H1 (cell line): ENCODE measurements at regions of chr1 and their contacts with region 1.

Region 1: DNA sequence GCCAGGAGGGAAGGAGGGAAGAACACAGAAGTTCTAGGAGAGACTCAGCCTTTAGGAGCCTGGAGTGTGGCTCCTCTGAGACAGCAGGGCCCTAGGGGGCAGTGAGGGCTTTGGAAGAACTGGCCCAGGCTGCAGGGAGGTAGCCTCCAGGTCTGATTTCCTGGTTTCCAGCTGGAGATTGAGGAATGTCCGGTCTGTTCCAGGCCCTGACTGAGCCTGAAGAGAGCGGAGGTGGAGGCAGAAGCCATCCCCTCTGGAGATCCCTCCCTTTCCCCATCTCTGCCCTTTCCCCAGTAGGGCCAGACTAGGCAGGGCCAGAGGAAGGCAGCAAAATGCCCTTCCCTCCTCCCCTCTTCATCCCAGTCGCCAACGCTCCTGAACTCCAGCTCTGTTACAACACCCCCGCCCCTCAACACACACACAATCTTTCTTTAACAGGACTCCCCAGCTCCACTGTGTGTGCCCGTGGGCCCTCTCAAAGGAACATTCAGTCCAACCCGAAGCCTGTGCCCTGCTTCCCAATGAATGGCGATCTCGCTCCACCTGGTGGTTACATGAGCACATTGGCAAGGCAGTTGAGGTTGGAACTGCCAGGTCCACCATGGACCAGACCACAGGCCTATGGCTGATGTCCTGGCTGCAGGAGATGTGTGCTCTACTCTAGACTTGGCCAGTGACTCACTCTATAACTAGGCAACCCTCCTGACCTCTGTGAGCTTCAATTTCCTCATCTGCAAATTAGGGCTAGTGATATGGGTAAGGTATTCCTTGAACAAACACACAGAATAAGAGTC is 32.0 kb downstream of the MAP7D1 start:
- DNase-seq: peak in 1 of 2 experiments; percentile 86
- H3K4me3 ChIP-seq: peak overlapping the region in 2 of 4 experiments; percentile 3 to 37; a peak in 3 of 8 replicates
- H3K27ac ChIP-seq: peak overlapping the region; percentile 19; the same call in 1 of the 2 replicates
- H3K4me1 ChIP-seq: peaks cover 0 to 6% (median 2%) of the 10 kb centered on the region in 4 experiments; a peak in 2 of 7 replicates
- H3K27me3 ChIP-seq: no peaks in the 10 kb centered on the region
- CTCF ChIP-seq: peak; percentile 93 to 98 (median 97)
- EP300 ChIP-seq: no peak; a peak in 1 of 3 replicates
- POLR2A ChIP-seq: peak in 1 of 2 experiments; percentile 62; a peak in 2 of 3 replicates
- RAD21 ChIP-seq: peak; percentile 95 to 97

Region 2: GRCh38 chr1:36099681-36100341 is 88.2 kb before region 1 on chr1:
- CTCF ChIA-PET with region 1: interaction called, 20 read pairs
- POLR2A ChIA-PET with region 1: interaction called, 4 read pairs
- DNase-seq: peak; percentile 76 to 96
- H3K4me3 ChIP-seq: no peak overlapping the region
- H3K27ac ChIP-seq: no peak overlapping the region
- H3K4me1 ChIP-seq: peaks cover 0 to 11% (median 7%) of the 10 kb centered on the region in 4 experiments; a peak in 3 of 7 replicates
- H3K27me3 ChIP-seq: 0 out of 7 replicates have a peak, but pooled peaks cover 0 to 2% (median 0%) of the 10 kb centered on the region in 4 experiments
- CTCF ChIP-seq: peak; percentile 90 to 97 (median 90)
- EP300 ChIP-seq: no peak
- POLR2A ChIP-seq: no peak
- RAD21 ChIP-seq: peak; percentile 97 to 98

Region 3: GRCh38 chr1:36134505-36135329 is 53.3 kb before region 1 on chr1:
- CTCF ChIA-PET with region 1: interaction called, 26 read pairs
- POLR2A ChIA-PET with region 1: no interaction called
- DNase-seq: peak in 1 of 2 experiments; percentile 90
- H3K4me3 ChIP-seq: no peak overlapping the region
- H3K27ac ChIP-seq: no peak overlapping the region
- H3K4me1 ChIP-seq: peaks cover 0 to 2% (median 0%) of the 10 kb centered on the region in 4 experiments; a peak in 2 of 7 replicates
- H3K27me3 ChIP-seq: no peaks in the 10 kb centered on the region
- CTCF ChIP-seq: peak; percentile 77 to 91 (median 83)
- EP300 ChIP-seq: no peak
- POLR2A ChIP-seq: no peak
- RAD21 ChIP-seq: peak; percentile 90 to 92

Region 4: GRCh38 chr1:36155408-36156328 is 32.3 kb before region 1 on chr1 and contains the start of gene MAP7D1:
- CTCF ChIA-PET with region 1: interaction called, 261 read pairs
- POLR2A ChIA-PET with region 1: interaction called, 17 read pairs
- DNase-seq: peak in 1 of 2 experiments; percentile 93
- H3K4me3 ChIP-seq: peak within 1 kb of the TSS; percentile 64 to 96 (median 76)
- H3K27ac ChIP-seq: peak within 1 kb of the TSS; percentile 49
- H3K4me1 ChIP-seq: peaks cover 2 to 28% (median 14%) of the 10 kb centered on the region in 4 experiments
- H3K27me3 ChIP-seq: peaks cover 11 to 29% (median 25%) of the 10 kb centered on the region in 4 experiments
- CTCF ChIP-seq: no peak
- EP300 ChIP-seq: peak in 1 of 2 experiments; percentile 70; a peak in 2 of 3 replicates
- POLR2A ChIP-seq: peak in 1 of 2 experiments; percentile 37; a peak in 1 of 3 replicates
- RAD21 ChIP-seq: no peak
- total RNA-seq, gene MAP7D1: 52.4 and 55.1 TPM in 2 replicates

Region 5: DNA sequence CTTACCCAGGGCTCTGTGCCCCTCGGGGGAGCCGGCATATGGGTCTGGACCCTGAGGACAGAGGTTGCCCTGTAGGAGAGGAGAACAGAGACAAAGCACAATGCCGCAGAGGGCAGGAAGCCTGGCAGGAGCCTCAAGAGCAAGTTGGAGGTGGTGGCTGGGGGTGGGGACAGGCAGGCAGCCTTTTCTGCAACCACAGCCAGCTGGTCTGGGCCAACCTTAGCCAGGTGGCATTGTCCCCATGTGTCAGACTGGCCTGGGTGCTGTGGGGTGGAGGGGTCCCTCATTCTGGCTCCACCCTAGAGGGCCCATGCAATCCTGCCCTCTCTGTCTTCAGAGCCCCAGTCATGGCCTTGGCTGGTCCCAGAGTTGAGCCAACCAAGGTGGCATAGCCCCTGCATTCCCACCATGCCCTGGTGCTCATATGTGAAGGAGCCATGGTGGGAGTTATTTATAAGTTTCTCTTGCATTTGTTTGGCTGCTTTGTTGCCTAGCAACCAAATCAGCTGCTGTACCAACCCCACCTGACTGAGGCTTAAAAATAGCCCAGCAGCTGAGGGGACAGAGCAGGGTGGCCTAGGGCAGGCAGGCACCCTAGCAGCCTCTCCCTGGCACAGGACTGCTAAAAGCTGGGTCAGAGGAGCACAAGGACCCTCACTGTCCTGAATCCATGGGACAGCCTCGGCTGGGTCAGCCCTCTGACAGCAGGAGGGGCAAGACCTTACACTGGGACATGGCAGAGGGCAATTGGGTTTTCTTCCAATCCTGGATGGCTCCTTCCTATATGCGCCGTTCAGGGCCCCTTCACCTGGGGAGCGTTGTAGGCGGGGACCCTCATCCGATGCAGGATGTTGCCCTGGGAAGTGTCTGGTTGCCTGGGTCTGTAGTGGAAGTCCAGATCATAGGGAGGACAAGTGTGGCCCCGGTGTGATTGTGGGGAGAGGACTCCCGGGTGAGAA is 12.6 kb before region 1 on chr1:
- CTCF ChIA-PET with region 1: interaction called, 233 read pairs
- POLR2A ChIA-PET with region 1: interaction called, 11 read pairs
- DNase-seq: peak in 1 of 2 experiments; percentile 61
- H3K4me3 ChIP-seq: peak overlapping the region in 2 of 4 experiments; percentile 15 to 48; a peak in 2 of 8 replicates
- H3K27ac ChIP-seq: peak overlapping the region; percentile 5
- H3K4me1 ChIP-seq: peaks cover 5 to 34% (median 28%) of the 10 kb centered on the region in 4 experiments
- H3K27me3 ChIP-seq: no peaks in the 10 kb centered on the region
- CTCF ChIP-seq: no peak
- EP300 ChIP-seq: no peak
- POLR2A ChIP-seq: no peak
- RAD21 ChIP-seq: no peak

Region 6: DNA sequence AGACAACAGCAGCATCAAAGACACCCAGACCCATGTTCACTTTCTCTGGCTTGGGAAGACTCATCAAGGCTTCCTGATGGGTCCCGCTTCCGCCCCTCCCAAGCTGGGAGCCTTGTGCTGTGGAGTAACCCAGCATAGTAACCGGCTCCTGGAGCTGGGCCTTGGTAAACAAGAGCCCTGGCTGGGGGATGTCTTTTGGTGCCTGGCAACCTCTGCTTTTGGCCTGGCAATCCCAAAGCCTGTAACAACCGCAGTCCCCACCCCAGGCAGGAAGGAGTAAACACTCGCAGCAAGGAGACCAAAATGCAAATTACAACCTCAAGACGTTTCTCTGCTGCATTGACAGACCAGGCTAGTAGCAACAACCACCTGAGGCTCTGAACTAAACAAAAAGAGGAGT is 19.3 kb after region 1 on chr1:
- CTCF ChIA-PET with region 1: interaction called, 31 read pairs
- POLR2A ChIA-PET with region 1: interaction called, 4 read pairs
- DNase-seq: peak in 1 of 2 experiments; percentile 53
- H3K4me3 ChIP-seq: no peak overlapping the region
- H3K27ac ChIP-seq: no peak overlapping the region
- H3K4me1 ChIP-seq: peaks cover 0 to 10% (median 3%) of the 10 kb centered on the region in 4 experiments; a peak in 5 of 7 replicates
- H3K27me3 ChIP-seq: no peaks in the 10 kb centered on the region
- CTCF ChIP-seq: no peak
- EP300 ChIP-seq: no peak
- POLR2A ChIP-seq: no peak
- RAD21 ChIP-seq: no peak

Region 7: DNA sequence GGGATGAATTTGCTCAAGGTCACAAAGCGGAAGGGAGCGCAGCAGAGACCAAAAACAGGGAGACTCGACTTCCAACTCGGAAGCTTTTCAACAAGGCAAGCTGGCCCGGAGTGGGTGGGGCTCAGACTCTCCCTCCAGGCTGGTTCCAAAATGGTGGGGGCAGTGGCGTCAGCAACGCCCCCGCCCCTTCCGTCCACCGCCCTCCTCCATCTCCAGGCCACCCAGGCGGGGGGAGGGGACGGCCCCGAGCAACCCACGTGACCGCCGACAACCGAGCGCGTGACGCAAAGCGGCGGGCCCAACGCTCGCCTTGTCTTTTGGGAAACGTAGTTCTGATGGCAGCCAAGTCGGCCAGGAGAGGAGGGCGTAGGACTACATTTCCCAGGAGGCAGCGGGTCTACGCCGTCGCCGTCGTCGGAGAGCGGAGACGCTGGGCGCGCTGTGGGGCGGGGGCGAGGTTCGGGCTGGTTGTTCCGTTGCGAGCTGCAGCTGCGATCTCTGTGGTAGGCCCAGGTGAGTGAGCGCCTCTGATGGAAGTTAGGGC is 36.1 kb after region 1 on chr1 and contains the start of gene THRAP3:
- CTCF ChIA-PET with region 1: interaction called, 30 read pairs
- POLR2A ChIA-PET with region 1: interaction called, 5 read pairs
- DNase-seq: peak; percentile 98 to 99
- H3K4me3 ChIP-seq: peak within 1 kb of the TSS; percentile 91 to 96 (median 94)
- H3K27ac ChIP-seq: peak within 1 kb of the TSS; percentile 98
- H3K4me1 ChIP-seq: peaks cover 0 to 3% (median 0%) of the 10 kb centered on the region in 4 experiments; a peak in 1 of 7 replicates
- H3K27me3 ChIP-seq: no peaks in the 10 kb centered on the region
- CTCF ChIP-seq: no peak
- EP300 ChIP-seq: peak in 1 of 2 experiments; percentile 22; a peak in 2 of 3 replicates
- POLR2A ChIP-seq: peak; percentile 84 to 99
- RAD21 ChIP-seq: no peak
- total RNA-seq, gene THRAP3: 183 TPM in 2 replicates

Region 8: GRCh38 chr1:36323597-36324352 is 135.8 kb after region 1 on chr1 and contains the start of gene EVA1B:
- CTCF ChIA-PET with region 1: no interaction called
- POLR2A ChIA-PET with region 1: no interaction called
- DNase-seq: peak in 1 of 2 experiments; percentile 79
- H3K4me3 ChIP-seq: peak within 1 kb of the TSS; percentile 27 to 67 (median 49)
- H3K27ac ChIP-seq: no peak within 1 kb of the TSS
- H3K4me1 ChIP-seq: peaks cover 0 to 28% (median 16%) of the 10 kb centered on the region in 4 experiments; a peak in 6 of 7 replicates
- H3K27me3 ChIP-seq: peaks cover 0 to 39% (median 20%) of the 10 kb centered on the region in 4 experiments; a peak in 5 of 7 replicates
- CTCF ChIP-seq: no peak
- EP300 ChIP-seq: no peak
- POLR2A ChIP-seq: no peak; a peak in 1 of 3 replicates
- RAD21 ChIP-seq: no peak
- total RNA-seq, gene EVA1B: 10.0 and 10.3 TPM in 2 replicates